PC-9 (cell line): ENCODE measurements at regions of chr5 and their contacts with region 1.

Region 1: DNA sequence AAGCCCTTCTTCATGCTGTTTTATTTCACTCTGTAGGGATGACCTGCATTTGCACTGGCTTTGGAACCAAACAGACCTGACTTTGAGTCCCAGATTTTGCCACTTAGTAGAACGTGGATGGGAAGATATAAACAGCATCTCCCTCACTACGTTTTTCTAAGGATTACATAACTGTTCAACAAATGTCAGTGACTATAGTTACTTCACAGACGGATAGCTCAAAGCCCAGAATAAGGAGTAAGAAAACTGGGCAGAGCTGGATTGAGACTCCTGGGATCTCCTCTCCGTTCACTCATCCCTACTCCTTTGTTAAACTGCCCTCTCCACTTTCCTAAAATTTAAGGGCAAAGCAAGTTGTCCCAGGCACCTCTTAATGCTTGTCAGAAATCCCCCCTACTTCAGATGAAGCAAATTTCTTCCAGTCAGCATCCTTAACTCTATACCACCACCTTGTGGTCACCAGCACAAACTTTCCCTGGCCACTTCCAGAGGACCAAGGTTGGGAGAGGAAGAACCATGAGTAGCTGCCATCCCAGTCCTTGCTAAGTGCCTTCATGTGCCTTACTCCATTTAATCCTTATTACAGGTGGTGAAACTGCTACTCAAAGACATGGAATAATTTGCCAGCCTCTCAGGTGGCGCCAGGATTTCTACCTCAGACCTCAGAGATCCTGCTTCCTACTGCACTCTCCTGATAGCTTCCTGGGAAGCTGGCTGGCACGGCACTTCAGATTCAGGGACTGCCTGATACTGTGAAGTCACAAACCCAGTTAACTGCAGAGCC is 38.4 kb downstream of the EGR1 start:
- DNase-seq: peak; percentile 24 to 38
- H3K4me3 ChIP-seq: no peak overlapping the region
- H3K27ac ChIP-seq: no peak overlapping the region
- H3K4me1 ChIP-seq: no peaks in the 10 kb centered on the region
- H3K27me3 ChIP-seq: no peaks in the 10 kb centered on the region
- CTCF ChIP-seq: peak; percentile 84

Region 2: GRCh38 chr5:138077065-138077696 is 426.5 kb before region 1 on chr5:
- CTCF ChIA-PET with region 1: no interaction called
- POLR2A ChIA-PET with region 1: no interaction called
- intact Hi-C with region 1: loop called (anchors 5 kb)
- DNase-seq: peak in 1 of 2 experiments; percentile 56
- H3K4me3 ChIP-seq: no peak overlapping the region
- H3K27ac ChIP-seq: no peak overlapping the region
- H3K4me1 ChIP-seq: no peaks in the 10 kb centered on the region
- H3K27me3 ChIP-seq: no peaks in the 10 kb centered on the region
- CTCF ChIP-seq: peak; percentile 92

Region 3: DNA sequence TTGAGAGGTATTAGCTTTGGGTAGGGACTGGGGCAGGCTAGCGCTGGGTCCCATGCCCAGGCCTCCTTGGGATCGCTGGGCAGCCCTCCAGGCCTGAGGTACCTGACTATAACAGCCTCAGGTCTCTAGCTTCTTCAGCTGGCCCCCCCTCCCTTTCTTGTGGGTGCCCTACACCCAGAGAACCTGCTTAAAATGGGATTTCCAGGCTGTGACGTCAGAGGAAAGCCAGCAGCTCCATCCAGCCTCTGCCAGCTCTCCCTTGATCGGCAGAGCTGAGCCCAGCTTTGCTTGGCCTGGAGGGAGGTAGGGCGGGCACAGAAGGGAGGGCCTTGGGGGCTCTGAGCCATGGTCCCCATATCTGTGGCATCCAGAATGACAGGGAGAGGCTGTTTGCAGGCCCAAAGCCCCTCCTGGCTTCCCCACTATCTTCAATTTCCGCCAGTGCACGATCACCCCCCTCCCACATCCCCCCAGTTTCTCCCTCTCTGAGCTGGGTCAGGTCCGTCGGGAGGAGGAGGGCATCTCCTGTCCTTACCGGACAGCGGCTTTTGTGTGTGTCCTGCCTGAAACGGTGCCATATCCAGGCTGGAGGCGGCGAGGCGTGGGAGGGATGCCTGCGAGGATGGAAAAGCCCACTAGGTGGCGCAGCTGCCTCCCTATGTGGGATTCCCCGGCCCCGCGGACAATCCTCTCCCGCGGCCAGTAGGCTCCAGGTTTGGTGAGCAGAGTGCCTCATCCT is 54.0 kb before region 1 on chr5:
- CTCF ChIA-PET with region 1: interaction called, 8 read pairs
- POLR2A ChIA-PET with region 1: interaction called, 9 read pairs
- intact Hi-C with region 1: loop called (anchors 1 kb)
- DNase-seq: peak; percentile 59 to 88
- H3K4me3 ChIP-seq: no peak overlapping the region
- H3K27ac ChIP-seq: no peak overlapping the region
- H3K4me1 ChIP-seq: no peaks in the 10 kb centered on the region
- H3K27me3 ChIP-seq: no peaks in the 10 kb centered on the region
- CTCF ChIP-seq: peak; percentile 92

Region 4: DNA sequence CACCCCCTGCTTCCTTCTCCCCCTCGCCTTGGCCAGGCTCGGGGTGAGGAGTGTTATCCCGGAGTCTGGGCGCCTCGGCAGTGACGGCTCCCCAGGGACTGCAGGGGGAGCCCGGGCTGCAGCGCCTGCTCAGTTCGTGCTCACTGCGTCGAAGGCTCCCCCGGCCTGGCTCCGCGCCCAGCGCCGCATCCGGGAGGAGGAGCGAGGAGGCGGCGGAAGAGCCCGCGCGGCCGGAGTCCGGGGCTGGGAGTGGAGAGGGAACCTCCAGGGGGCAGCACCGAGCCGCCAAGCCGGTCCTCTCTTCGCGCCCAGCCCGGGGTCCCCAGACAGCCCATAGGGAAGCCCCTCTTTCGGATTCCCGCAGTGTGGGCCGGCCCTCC is 39.7 kb before region 1 on chr5:
- CTCF ChIA-PET with region 1: interaction called, 6 read pairs
- POLR2A ChIA-PET with region 1: interaction called, 8 read pairs
- intact Hi-C with region 1: loop called (anchors 1 kb)
- DNase-seq: peak; percentile 78 to 94
- H3K4me3 ChIP-seq: peak overlapping the region; percentile 80
- H3K27ac ChIP-seq: peak overlapping the region; percentile 81
- H3K4me1 ChIP-seq: peaks cover 6% of the 10 kb centered on the region
- H3K27me3 ChIP-seq: no peaks in the 10 kb centered on the region
- CTCF ChIP-seq: peak; percentile 93